ENCODE measurements at regions of chr9 and their contacts with region 1.

Region 1: GRCh38 chr9:17052626-17053025 is 82.2 kb upstream of the CNTLN start:
- DNase-seq: no peak
- H3K4me3 ChIP-seq: no peak overlapping the region
- H3K27ac ChIP-seq: no peak overlapping the region
- H3K4me1 ChIP-seq: no peaks in the 10 kb centered on the region
- H3K27me3 ChIP-seq: no peaks in the 10 kb centered on the region
- CTCF ChIP-seq: no peak

Region 2: GRCh38 chr9:17414986-17415385 is 362.4 kb after region 1 on chr9:
- CTCF ChIA-PET with region 1: no interaction called
- POLR2A ChIA-PET with region 1: interaction called, 10 read pairs
- intact Hi-C with region 1: no loop called
- DNase-seq: no peak
- H3K4me3 ChIP-seq: no peak overlapping the region
- H3K27ac ChIP-seq: no peak overlapping the region
- H3K4me1 ChIP-seq: no peaks in the 10 kb centered on the region
- H3K27me3 ChIP-seq: no peaks in the 10 kb centered on the region
- CTCF ChIP-seq: no peak

Measured in PC-9 (cell line).